ENCODE measurements at regions of chr14 and their contacts with region 1.

Region 1: GRCh38 chr14:90785471-90785870 is 30.8 kb downstream of the TTC7B start:
- DNase-seq: peak; percentile 33
- ATAC-seq: peak; percentile 93
- H3K4me3 Mint-ChIP-seq: no peak overlapping the region
- H3K27ac Mint-ChIP-seq: no peak overlapping the region
- H3K4me1 Mint-ChIP-seq: no peaks in the 10 kb centered on the region
- H3K27me3 Mint-ChIP-seq: no peaks in the 10 kb centered on the region
- CTCF ChIP-seq: no peak

Region 2: DNA sequence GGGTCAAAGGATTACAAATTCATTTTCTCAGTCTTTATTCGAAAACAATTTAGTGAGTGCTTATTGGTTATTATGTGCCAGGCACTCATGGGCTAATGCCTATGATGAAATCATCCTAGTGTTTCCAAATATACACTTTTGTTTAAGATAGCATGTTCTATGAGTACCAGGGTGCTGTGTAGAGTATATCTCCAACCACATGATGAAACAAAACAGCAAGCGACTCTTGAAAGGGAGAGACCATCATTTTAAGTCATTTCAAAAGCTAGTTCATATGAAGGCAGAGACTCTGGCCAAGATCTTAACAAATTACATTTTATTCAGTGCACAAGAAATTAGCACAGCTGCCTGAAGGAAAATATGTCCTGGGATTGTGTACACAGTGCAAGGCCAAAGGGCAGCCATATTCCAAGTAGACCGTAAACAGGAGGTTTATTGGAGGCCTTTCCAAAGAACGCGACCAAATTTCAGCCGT is 1035.2 kb before region 1 on chr14:
- CTCF ChIA-PET with region 1: no interaction called
- POLR2A ChIA-PET with region 1: no interaction called
- DNase-seq: no peak
- ATAC-seq: no peak
- H3K4me3 Mint-ChIP-seq: no peak overlapping the region
- H3K27ac Mint-ChIP-seq: no peak overlapping the region
- H3K4me1 Mint-ChIP-seq: 0 out of 2 replicates have a peak, but pooled peaks cover 3% of the 10 kb centered on the region
- H3K27me3 Mint-ChIP-seq: no peaks in the 10 kb centered on the region; the same call in 1 of the 2 replicates
- CTCF ChIP-seq: no peak

Region 3: GRCh38 chr14:90774316-90774715 is 11.2 kb before region 1 on chr14:
- CTCF ChIA-PET with region 1: interaction called, 12 read pairs
- POLR2A ChIA-PET with region 1: no interaction called
- DNase-seq: no peak
- ATAC-seq: no peak
- H3K4me3 Mint-ChIP-seq: no peak overlapping the region
- H3K27ac Mint-ChIP-seq: no peak overlapping the region
- H3K4me1 Mint-ChIP-seq: no peaks in the 10 kb centered on the region
- H3K27me3 Mint-ChIP-seq: no peaks in the 10 kb centered on the region
- CTCF ChIP-seq: no peak

Region 4: GRCh38 chr14:90795746-90796145 is 10.3 kb after region 1 on chr14:
- CTCF ChIA-PET with region 1: interaction called, 24 read pairs
- POLR2A ChIA-PET with region 1: no interaction called
- DNase-seq: no peak
- ATAC-seq: peak; percentile 44
- H3K4me3 Mint-ChIP-seq: no peak overlapping the region
- H3K27ac Mint-ChIP-seq: no peak overlapping the region
- H3K4me1 Mint-ChIP-seq: peaks cover 15% of the 10 kb centered on the region
- H3K27me3 Mint-ChIP-seq: no peaks in the 10 kb centered on the region
- CTCF ChIP-seq: no peak

Region 5: DNA sequence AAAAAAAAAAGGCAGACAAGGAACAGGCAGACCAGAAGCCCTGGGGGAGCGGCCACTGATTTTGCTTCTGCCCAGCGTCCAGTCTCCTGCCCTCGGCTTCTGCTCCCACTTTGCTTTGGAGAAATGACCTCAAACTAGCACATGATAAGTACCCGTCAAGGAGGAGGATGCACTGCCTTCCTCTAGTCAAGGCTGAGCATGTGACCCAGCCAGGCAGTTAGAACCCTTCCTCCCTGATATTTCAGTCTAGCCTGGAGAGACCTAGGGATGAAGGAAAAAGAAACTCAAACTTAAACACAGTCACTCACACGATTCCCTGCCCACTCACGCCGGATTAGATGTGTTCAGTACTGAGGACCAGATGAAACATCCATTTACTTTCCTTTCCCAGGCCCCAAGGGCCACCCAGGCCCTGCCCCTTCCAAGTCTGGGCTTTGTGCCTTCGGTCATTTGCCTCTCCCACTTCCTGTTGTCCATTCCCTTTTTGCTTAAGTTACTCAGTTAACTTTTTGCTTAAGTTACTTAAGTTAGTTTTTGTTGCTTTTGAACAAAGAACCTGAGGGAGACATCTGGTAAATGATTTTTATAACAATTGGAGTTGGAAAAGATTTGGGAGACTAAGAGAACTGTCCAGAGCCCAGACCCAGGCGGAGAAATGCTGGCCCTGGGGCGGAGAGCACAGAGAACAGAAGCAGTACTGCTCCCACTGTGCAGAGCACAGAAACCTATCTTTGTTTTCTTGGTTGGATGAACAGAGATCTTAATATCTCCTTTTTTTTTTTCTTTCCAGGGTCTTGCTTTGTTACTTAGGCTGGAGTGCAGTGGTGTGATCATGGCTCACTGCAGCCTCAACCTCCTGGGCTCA is 53.8 kb after region 1 on chr14:
- CTCF ChIA-PET with region 1: no interaction called
- POLR2A ChIA-PET with region 1: no interaction called
- DNase-seq: no peak
- ATAC-seq: no peak
- H3K4me3 Mint-ChIP-seq: no peak overlapping the region
- H3K27ac Mint-ChIP-seq: no peak overlapping the region
- H3K4me1 Mint-ChIP-seq: peaks cover 3% of the 10 kb centered on the region; the same call in 1 of the 2 replicates
- H3K27me3 Mint-ChIP-seq: no peaks in the 10 kb centered on the region; the same call in 1 of the 2 replicates
- CTCF ChIP-seq: no peak

Measured in WTC11 (cell line).